CD8-positive, alpha-beta T cell (primary cell): ENCODE measurements at regions of chr5 and their contacts with region 1.

Region 1: GRCh38 chr5:32489791-32490582 is 45.4 kb upstream of the ZFR start:
- DNase-seq: peak; percentile 41 to 80 (median 73)
- ATAC-seq: no peak
- H3K4me3 ChIP-seq: no peak overlapping the region
- H3K4me3 Mint-ChIP-seq: no peak overlapping the region
- H3K27ac ChIP-seq: no peak overlapping the region
- H3K27ac Mint-ChIP-seq: no peak overlapping the region
- H3K4me1 ChIP-seq: no peaks in the 10 kb centered on the region
- H3K4me1 Mint-ChIP-seq: no peaks in the 10 kb centered on the region
- H3K27me3 ChIP-seq: no peaks in the 10 kb centered on the region
- H3K27me3 Mint-ChIP-seq: no peaks in the 10 kb centered on the region
- CTCF ChIP-seq: peak; percentile 71

Region 2: DNA sequence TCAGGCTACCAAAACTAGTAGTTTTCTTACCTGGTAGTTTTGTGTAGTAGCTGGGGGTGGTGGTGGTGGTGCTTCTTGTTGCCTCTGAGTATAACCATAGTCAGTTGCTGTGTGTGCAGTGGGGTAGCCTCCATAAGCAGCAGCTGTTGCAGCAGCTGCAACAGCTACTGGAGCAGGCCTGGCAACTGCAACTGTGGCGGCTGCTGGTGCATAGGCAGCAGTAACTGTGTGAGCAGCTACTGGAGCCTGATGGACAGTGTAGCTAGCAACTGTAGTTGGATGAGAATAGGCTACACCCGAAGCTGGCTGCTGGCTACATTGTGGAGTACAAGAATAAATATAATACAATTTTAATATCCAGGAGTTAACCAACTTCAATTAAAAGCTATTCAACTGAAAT is 70.2 kb before region 1 on chr5:
- CTCF ChIA-PET with region 1: no interaction called
- POLR2A ChIA-PET with region 1: no interaction called
- intact Hi-C with region 1: no loop called
- DNase-seq: no peak
- ATAC-seq: no peak
- H3K4me3 ChIP-seq: no peak overlapping the region
- H3K4me3 Mint-ChIP-seq: no peak overlapping the region
- H3K27ac ChIP-seq: no peak overlapping the region
- H3K27ac Mint-ChIP-seq: no peak overlapping the region
- H3K4me1 ChIP-seq: peaks cover 6% of the 10 kb centered on the region
- H3K4me1 Mint-ChIP-seq: peaks cover 43% of the 10 kb centered on the region
- H3K27me3 ChIP-seq: no peaks in the 10 kb centered on the region
- H3K27me3 Mint-ChIP-seq: no peaks in the 10 kb centered on the region
- CTCF ChIP-seq: no peak

Region 3: GRCh38 chr5:32475334-32476097 is 14.5 kb before region 1 on chr5:
- CTCF ChIA-PET with region 1: interaction called, 28 read pairs
- POLR2A ChIA-PET with region 1: no interaction called
- intact Hi-C with region 1: no loop called
- DNase-seq: no peak
- ATAC-seq: no peak
- H3K4me3 ChIP-seq: no peak overlapping the region
- H3K4me3 Mint-ChIP-seq: no peak overlapping the region
- H3K27ac ChIP-seq: no peak overlapping the region
- H3K27ac Mint-ChIP-seq: no peak overlapping the region
- H3K4me1 ChIP-seq: no peaks in the 10 kb centered on the region
- H3K4me1 Mint-ChIP-seq: no peaks in the 10 kb centered on the region
- H3K27me3 ChIP-seq: no peaks in the 10 kb centered on the region
- H3K27me3 Mint-ChIP-seq: no peaks in the 10 kb centered on the region
- CTCF ChIP-seq: no peak

Region 4: GRCh38 chr5:32504989-32505596 is 15.1 kb after region 1 on chr5:
- CTCF ChIA-PET with region 1: interaction called, 27 read pairs
- POLR2A ChIA-PET with region 1: no interaction called
- intact Hi-C with region 1: no loop called
- DNase-seq: peak in 2 of 9 experiments; percentile 5 to 15
- ATAC-seq: no peak
- H3K4me3 ChIP-seq: no peak overlapping the region
- H3K4me3 Mint-ChIP-seq: no peak overlapping the region
- H3K27ac ChIP-seq: no peak overlapping the region
- H3K27ac Mint-ChIP-seq: no peak overlapping the region
- H3K4me1 ChIP-seq: peaks cover 10% of the 10 kb centered on the region
- H3K4me1 Mint-ChIP-seq: peaks cover 12% of the 10 kb centered on the region
- H3K27me3 ChIP-seq: no peaks in the 10 kb centered on the region
- H3K27me3 Mint-ChIP-seq: peaks cover 9% of the 10 kb centered on the region
- CTCF ChIP-seq: no peak

Region 5: DNA sequence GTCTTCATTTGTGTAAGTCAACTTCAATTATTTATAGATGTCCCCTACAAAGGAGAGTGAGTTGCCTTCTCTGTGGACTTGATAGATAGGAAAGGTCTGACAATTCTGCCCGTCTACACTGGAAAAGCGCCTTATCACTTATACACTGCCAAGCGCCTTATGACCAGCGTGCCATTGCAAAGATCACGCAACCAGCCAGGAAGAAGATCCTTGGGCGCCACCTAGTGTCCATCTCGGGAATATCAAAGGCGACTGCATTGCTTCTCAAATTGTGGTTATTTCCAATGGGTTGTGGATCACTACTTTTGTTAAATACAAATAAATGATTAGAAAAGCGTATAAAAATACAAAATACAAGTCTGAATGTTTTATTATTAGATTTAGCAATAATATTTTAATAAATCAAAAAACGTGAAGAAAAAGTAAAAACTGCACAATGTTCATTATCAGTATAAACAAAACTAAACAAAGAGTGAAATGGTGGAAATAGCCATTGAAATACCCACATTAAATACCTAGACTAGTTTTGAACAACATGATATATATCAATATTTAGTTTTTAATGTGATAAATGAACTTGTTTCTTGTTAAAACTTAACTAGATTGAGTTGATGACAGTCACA is 123.2 kb after region 1 on chr5:
- CTCF ChIA-PET with region 1: interaction called, 66 read pairs
- POLR2A ChIA-PET with region 1: interaction called, 5 read pairs
- intact Hi-C with region 1: loop called (anchors 1 kb)
- DNase-seq: peak; percentile 68 to 89 (median 82)
- ATAC-seq: peak; percentile 92
- H3K4me3 ChIP-seq: no peak overlapping the region
- H3K4me3 Mint-ChIP-seq: no peak overlapping the region
- H3K27ac ChIP-seq: no peak overlapping the region
- H3K27ac Mint-ChIP-seq: no peak overlapping the region
- H3K4me1 ChIP-seq: no peaks in the 10 kb centered on the region
- H3K4me1 Mint-ChIP-seq: peaks cover 9% of the 10 kb centered on the region
- H3K27me3 ChIP-seq: no peaks in the 10 kb centered on the region
- H3K27me3 Mint-ChIP-seq: no peaks in the 10 kb centered on the region
- CTCF ChIP-seq: peak; percentile 94